Dendritic cell treated with granulocyte-macrophage colony-stimulating factor and Interleukin-4, amounts not matched to agents 40 ng/mL and 50 ng/mL, for 4 days (primary cell): ENCODE measurements at regions of chr10 and their contacts with region 1.

Region 1: GRCh38 chr10:118729641-118730258 is 25.0 kb downstream of the CACUL1 start:
- H3K4me3 Mint-ChIP-seq: peak overlapping the region; percentile 17
- H3K27ac Mint-ChIP-seq: peak overlapping the region; percentile 71
- H3K4me1 Mint-ChIP-seq: peaks cover 60% of the 10 kb centered on the region
- H3K27me3 Mint-ChIP-seq: no peaks in the 10 kb centered on the region

Region 2: DNA sequence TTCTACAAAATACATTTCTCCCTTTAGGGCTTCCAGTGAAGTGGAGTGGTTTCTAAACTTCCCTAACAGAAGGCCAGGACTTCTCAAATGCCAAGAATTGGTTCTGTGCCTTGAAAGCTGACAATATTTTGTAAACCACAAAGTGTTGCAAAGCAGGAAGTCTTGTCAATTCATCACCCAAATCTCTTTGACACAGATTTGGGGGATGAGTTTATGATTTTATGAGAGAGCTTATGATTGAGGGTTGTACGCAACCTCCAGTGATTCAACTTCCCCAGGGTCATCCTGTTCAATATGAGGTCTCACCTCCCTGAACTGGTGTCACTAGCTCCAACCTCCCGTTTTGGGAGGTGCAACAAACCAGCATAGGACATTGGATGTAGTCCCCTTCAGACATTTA is 218.0 kb before region 1 on chr10:
- intact Hi-C with region 1: no loop called
- H3K4me3 Mint-ChIP-seq: no peak overlapping the region
- H3K27ac Mint-ChIP-seq: no peak overlapping the region
- H3K4me1 Mint-ChIP-seq: peaks cover 35% of the 10 kb centered on the region
- H3K27me3 Mint-ChIP-seq: peaks cover 11% of the 10 kb centered on the region

Region 3: GRCh38 chr10:118792526-118792925 is 62.8 kb after region 1 on chr10:
- intact Hi-C with region 1: loop called (anchors 5 kb)
- H3K4me3 Mint-ChIP-seq: peak overlapping the region; percentile 62
- H3K27ac Mint-ChIP-seq: peak overlapping the region; percentile 97
- H3K4me1 Mint-ChIP-seq: peaks cover 48% of the 10 kb centered on the region
- H3K27me3 Mint-ChIP-seq: no peaks in the 10 kb centered on the region

Region 4: GRCh38 chr10:118832241-118832651 is 102.5 kb after region 1 on chr10:
- intact Hi-C with region 1: no loop called
- H3K4me3 Mint-ChIP-seq: peak overlapping the region; percentile 13
- H3K27ac Mint-ChIP-seq: no peak overlapping the region
- H3K4me1 Mint-ChIP-seq: peaks cover 17% of the 10 kb centered on the region
- H3K27me3 Mint-ChIP-seq: no peaks in the 10 kb centered on the region